ENCODE measurements at regions of chr4 and their contacts with region 1.

Region 1: DNA sequence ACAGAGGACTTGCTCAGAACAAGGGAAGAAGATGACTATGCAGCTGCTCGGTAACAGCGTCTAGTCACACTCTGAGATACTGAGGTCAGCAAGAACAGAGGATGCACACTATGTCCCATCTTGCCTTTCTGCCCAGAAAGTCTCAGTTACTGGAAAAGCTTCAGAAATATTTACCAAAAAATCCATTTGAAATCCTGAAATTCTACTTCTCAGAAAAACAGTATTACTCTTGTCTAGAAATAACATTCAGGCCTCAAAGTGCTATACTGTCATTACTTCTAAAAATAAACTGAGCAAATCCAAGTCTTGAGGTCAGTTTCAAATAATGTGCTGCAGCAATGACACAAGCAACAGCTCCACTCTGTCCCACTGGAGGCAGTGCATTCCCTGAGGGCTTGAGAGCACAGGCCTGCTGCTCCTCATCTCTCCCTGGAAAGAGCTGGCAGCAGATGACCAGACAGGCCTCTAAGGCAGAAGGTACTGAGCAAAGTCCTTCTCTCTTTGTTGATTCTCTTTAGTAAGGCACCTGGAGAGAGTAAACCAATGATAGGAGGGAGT is 76.9 kb downstream of the CAMK2D start:
- DNase-seq: peak; percentile 83
- H3K4me3 ChIP-seq: no peak overlapping the region
- H3K27ac ChIP-seq: peak overlapping the region; percentile 46 to 77 (median 70)
- H3K4me1 ChIP-seq: peaks cover 0 to 46% (median 38%) of the 10 kb centered on the region in 4 donors
- H3K27me3 ChIP-seq: no peaks in the 10 kb centered on the region
- CTCF ChIP-seq: peak; percentile 9 to 41 (median 35)
- EP300 ChIP-seq: peak in 2 of 4 donors; percentile 16 to 38
- POLR2A ChIP-seq: no peak

Region 2: GRCh38 chr4:113633467-113633866 is 51.1 kb before region 1 on chr4:
- intact Hi-C with region 1: loop called (anchors 2 kb)
- DNase-seq: no peak
- H3K4me3 ChIP-seq: no peak overlapping the region
- H3K27ac ChIP-seq: no peak overlapping the region
- H3K4me1 ChIP-seq: peaks cover 0 to 58% (median 39%) of the 10 kb centered on the region in 4 donors
- H3K27me3 ChIP-seq: no peaks in the 10 kb centered on the region
- CTCF ChIP-seq: no peak
- EP300 ChIP-seq: no peak
- POLR2A ChIP-seq: no peak

Measured in sigmoid colon (tissue), 7 donors.